ENCODE measurements at regions of chr2 and their contacts with region 1.

Region 1: DNA sequence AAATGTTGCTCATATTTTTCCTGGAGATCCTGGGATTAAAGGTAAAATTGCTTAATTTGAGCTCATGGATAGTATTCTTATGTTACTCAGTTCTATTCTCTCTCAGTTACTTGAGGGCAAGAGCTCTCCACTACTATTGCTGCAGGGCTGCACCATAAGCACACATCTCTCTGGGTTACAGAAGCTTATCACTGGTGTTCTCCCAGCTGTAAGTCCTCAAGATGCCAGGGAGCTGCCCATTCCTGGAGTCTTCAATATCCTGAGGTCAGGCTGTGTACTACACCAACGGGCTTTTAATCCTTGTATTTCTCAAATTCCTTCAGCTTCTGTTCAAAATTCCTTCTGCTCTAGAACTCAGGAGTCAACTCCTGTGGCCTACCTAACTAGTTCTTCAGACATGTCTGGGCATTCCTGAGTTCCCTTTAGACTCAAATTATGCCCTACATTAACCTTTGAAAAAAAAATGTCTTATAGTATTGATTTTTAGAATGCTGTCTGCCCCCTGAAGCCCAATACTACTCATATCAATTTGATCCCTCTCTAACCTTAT is 17.7 kb upstream of the COBLL1 start:
- DNase-seq: no peak
- ATAC-seq: no peak
- H3K4me3 ChIP-seq: no peak overlapping the region
- H3K4me3 Mint-ChIP-seq: no peak overlapping the region
- H3K27ac ChIP-seq: no peak overlapping the region
- H3K27ac Mint-ChIP-seq: no peak overlapping the region
- H3K4me1 ChIP-seq: no peaks in the 10 kb centered on the region
- H3K4me1 Mint-ChIP-seq: no peaks in the 10 kb centered on the region
- H3K27me3 ChIP-seq: no peaks in the 10 kb centered on the region
- H3K27me3 Mint-ChIP-seq: peaks cover 2% of the 10 kb centered on the region
- CTCF ChIP-seq: no peak

Region 2: GRCh38 chr2:164841719-164842623 is 17.4 kb before region 1 on chr2 and contains the start of gene COBLL1:
- CTCF ChIA-PET with region 1: no interaction called
- POLR2A ChIA-PET with region 1: no interaction called
- intact Hi-C with region 1: loop called in 1 of 2 experiments (anchors 1 kb)
- DNase-seq: peak in 5 of 9 experiments; percentile 5 to 34 (median 20)
- ATAC-seq: peak; percentile 14
- H3K4me3 ChIP-seq: peak within 1 kb of the TSS; percentile 33 to 44
- H3K4me3 Mint-ChIP-seq: peak within 1 kb of the TSS; percentile 80
- H3K27ac ChIP-seq: no peak within 1 kb of the TSS
- H3K27ac Mint-ChIP-seq: no peak within 1 kb of the TSS
- H3K4me1 ChIP-seq: no peaks in the 10 kb centered on the region
- H3K4me1 Mint-ChIP-seq: peaks cover 7% of the 10 kb centered on the region
- H3K27me3 ChIP-seq: peaks cover 3 to 10% of the 10 kb centered on the region in 2 experiments
- H3K27me3 Mint-ChIP-seq: peaks cover 36% of the 10 kb centered on the region
- CTCF ChIP-seq: peak; percentile 29
- total RNA-seq, gene COBLL1: 0.76 to 1.4 TPM

Measured in CD8-positive, alpha-beta T cell (primary cell).